HepG2 (cell line): ENCODE measurements at regions of chr12 and their contacts with region 1.

Region 1: GRCh38 chr12:113221181-113221997 is at the start of gene TPCN1:
- DNase-seq: peak; percentile 100
- ATAC-seq: peak; percentile 93
- H3K4me3 ChIP-seq: peak within 1 kb of the TSS; percentile 67 to 90 (median 89)
- H3K27ac ChIP-seq: peak within 1 kb of the TSS; percentile 83
- H3K4me1 ChIP-seq: peaks cover 45% of the 10 kb centered on the region
- H3K27me3 ChIP-seq: no peaks in the 10 kb centered on the region
- CTCF ChIP-seq: peak; percentile 23; the same call in 1 of the 2 replicates
- EP300 ChIP-seq: no peak
- POLR2A ChIP-seq: peak; percentile 92 to 99
- RAD21 ChIP-seq: peak; percentile 69
- total RNA-seq, gene TPCN1: 3.8 and 8.0 TPM in 2 replicates

Region 2: DNA sequence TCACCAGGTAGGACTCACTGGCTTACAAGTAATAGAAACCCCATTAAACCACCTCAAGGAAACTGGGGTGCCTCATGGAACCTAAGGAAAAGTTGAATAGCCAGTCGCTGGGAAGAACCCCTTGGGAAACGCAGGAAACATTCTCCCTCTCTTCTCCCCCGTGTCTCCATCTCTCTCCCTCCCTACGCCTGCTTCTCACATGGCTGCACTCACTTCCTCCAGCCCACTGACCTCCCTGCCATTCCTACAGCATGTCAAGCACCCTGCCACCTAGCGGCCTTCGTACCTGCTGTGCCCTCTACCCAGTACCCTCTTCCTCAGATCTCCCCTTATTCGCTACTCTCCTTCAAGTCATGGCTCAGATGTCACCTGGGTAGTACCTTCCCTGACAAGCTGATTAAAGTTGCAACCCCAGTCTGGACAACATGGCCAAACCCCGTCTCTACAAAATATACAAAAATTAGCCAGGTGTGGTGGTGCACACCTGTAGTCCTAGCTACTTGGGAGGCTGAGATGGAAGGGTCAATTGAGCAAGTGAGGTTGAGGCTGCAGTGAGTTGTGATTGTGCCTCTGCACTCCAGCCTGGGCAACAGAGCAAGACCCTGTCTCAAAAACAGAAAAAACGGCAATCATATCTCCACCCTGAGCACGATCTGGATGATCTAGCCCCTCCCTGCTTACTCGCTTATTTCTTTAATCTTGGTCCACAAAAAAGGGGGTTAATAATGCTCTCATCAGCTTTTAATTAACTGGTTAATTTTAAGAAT is 171.2 kb before region 1 on chr12:
- CTCF ChIA-PET with region 1: no interaction called
- POLR2A ChIA-PET with region 1: no interaction called
- in situ Hi-C with region 1: no loop called
- intact Hi-C with region 1: no loop called
- DNase-seq: peak; percentile 29
- ATAC-seq: peak; percentile 89
- H3K4me3 ChIP-seq: no peak overlapping the region
- H3K27ac ChIP-seq: no peak overlapping the region
- H3K4me1 ChIP-seq: no peaks in the 10 kb centered on the region
- H3K27me3 ChIP-seq: peaks cover 1 to 6% of the 10 kb centered on the region in 2 experiments; a peak in 2 of 5 replicates
- CTCF ChIP-seq: peak; percentile 63
- EP300 ChIP-seq: no peak
- POLR2A ChIP-seq: no peak
- RAD21 ChIP-seq: no peak

Region 3: DNA sequence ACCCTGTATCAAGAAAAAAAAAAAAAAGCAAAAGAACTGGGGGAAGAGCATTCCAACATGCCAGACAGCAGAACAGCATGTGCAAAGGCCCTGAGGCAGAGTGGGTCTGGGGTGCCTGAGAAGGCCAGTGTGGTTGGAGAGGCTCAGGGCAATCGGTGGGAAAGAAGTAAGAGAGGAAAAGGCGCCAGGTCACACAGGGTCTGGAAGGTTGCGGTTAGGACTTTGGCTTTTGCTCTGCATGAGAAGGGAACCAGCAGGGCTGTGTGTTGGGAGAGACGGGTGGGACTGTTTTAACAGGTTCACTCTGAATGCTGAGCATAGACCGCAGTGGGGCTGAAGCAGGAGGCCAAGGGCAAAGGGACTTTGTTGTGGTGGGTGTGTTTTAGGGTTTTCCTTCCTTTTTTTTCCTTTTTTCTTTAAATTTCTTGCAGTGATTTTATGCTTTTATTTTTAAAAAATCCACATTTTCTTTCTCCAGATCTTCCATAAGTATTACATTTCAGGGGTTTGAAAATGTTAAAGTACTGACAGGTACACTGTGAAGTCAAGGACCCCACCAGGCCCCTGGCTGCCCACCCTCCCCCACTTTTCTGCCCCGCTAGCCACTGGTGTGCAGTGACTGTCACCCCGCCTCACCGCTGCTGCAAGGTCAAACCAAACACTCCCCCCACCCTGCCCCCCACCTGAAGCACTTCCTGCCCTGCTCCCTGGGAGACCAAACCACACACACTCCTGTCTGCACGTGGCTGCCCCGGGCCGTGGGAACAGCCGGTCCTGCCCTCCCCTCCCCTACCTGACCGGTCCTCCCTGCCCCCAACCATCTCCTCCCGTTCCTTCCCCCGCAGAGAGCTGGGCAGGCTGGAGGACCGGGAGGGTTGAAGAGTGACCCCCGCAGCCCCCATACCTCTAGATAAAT is 134.9 kb before region 1 on chr12:
- CTCF ChIA-PET with region 1: no interaction called
- POLR2A ChIA-PET with region 1: no interaction called
- in situ Hi-C with region 1: no loop called
- intact Hi-C with region 1: no loop called
- DNase-seq: peak; percentile 23
- ATAC-seq: peak; percentile 72
- H3K4me3 ChIP-seq: no peak overlapping the region
- H3K27ac ChIP-seq: no peak overlapping the region
- H3K4me1 ChIP-seq: peaks cover 17% of the 10 kb centered on the region
- H3K27me3 ChIP-seq: no peaks in the 10 kb centered on the region
- CTCF ChIP-seq: no peak
- EP300 ChIP-seq: no peak
- POLR2A ChIP-seq: no peak
- RAD21 ChIP-seq: no peak

Region 4: GRCh38 chr12:113208041-113208934 is 13.1 kb before region 1 on chr12:
- CTCF ChIA-PET with region 1: no interaction called
- POLR2A ChIA-PET with region 1: interaction called, 39 read pairs
- in situ Hi-C with region 1: no loop called
- intact Hi-C with region 1: no loop called
- DNase-seq: no peak
- ATAC-seq: peak; percentile 34; the same call in 2 of the 3 replicates
- H3K4me3 ChIP-seq: no peak overlapping the region
- H3K27ac ChIP-seq: no peak overlapping the region
- H3K4me1 ChIP-seq: peaks cover 49% of the 10 kb centered on the region
- H3K27me3 ChIP-seq: no peaks in the 10 kb centered on the region
- CTCF ChIP-seq: no peak
- EP300 ChIP-seq: no peak
- POLR2A ChIP-seq: no peak
- RAD21 ChIP-seq: no peak

Region 5: DNA sequence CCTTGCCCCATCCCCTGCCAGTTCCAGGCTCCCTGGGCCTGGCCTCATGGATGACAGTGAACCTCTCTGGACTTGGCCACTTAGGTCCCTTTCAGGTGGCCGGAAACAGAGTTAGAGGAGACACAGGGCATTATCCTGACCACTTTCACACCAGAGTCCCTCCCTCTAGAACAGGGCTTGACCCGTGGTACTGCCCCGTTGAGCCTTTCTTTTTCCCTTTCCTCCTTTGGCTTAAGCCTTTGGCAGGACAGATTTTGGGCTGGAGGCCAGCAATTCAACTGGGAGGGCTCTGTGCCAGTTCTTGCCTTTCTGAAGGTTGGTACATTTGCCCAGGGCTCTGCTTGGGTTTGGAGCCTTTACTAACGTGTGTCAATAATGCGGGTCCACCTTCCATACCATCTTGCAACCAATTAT is 22.7 kb after region 1 on chr12:
- CTCF ChIA-PET with region 1: no interaction called
- POLR2A ChIA-PET with region 1: interaction called, 28 read pairs
- in situ Hi-C with region 1: no loop called
- intact Hi-C with region 1: no loop called
- DNase-seq: no peak
- ATAC-seq: no peak
- H3K4me3 ChIP-seq: no peak overlapping the region
- H3K27ac ChIP-seq: no peak overlapping the region
- H3K4me1 ChIP-seq: peaks cover 53% of the 10 kb centered on the region
- H3K27me3 ChIP-seq: no peaks in the 10 kb centered on the region
- CTCF ChIP-seq: no peak
- EP300 ChIP-seq: no peak
- POLR2A ChIP-seq: no peak
- RAD21 ChIP-seq: no peak

Region 6: GRCh38 chr12:113298861-113299545 is 77.6 kb after region 1 on chr12:
- CTCF ChIA-PET with region 1: no interaction called
- POLR2A ChIA-PET with region 1: no interaction called
- in situ Hi-C with region 1: no loop called
- intact Hi-C with region 1: loop called (anchors 1 kb)
- DNase-seq: no peak
- ATAC-seq: peak; percentile 12; the same call in 2 of the 3 replicates
- H3K4me3 ChIP-seq: no peak overlapping the region
- H3K27ac ChIP-seq: no peak overlapping the region
- H3K4me1 ChIP-seq: peaks cover 34% of the 10 kb centered on the region
- H3K27me3 ChIP-seq: no peaks in the 10 kb centered on the region
- CTCF ChIP-seq: no peak
- EP300 ChIP-seq: no peak
- POLR2A ChIP-seq: no peak
- RAD21 ChIP-seq: no peak

Region 7: GRCh38 chr12:113788020-113788856 is 566.8 kb after region 1 on chr12:
- CTCF ChIA-PET with region 1: no interaction called
- POLR2A ChIA-PET with region 1: no interaction called
- in situ Hi-C with region 1: no loop called
- intact Hi-C with region 1: no loop called
- DNase-seq: no peak
- ATAC-seq: no peak
- H3K4me3 ChIP-seq: no peak overlapping the region
- H3K27ac ChIP-seq: no peak overlapping the region
- H3K4me1 ChIP-seq: peaks cover 29% of the 10 kb centered on the region
- H3K27me3 ChIP-seq: no peaks in the 10 kb centered on the region; a peak in 1 of 5 replicates
- CTCF ChIP-seq: no peak
- EP300 ChIP-seq: no peak
- POLR2A ChIP-seq: no peak
- RAD21 ChIP-seq: no peak